Mucosa of descending colon (tissue), 3 donors: ENCODE measurements at regions of chr3 and their contacts with region 1.

Region 1: GRCh38 chr3:94062431-94063404 is at the starts of genes DHFR2 and NSUN3:
- DNase-seq: peak; percentile 89 to 94 (median 94)
- ATAC-seq: peak; percentile 94
- H3K4me3 ChIP-seq: peak within 1 kb of the TSS; percentile 64
- H3K4me1 ChIP-seq: peaks cover 28% of the 10 kb centered on the region
- CTCF ChIP-seq: no peak
- total RNA-seq, gene DHFR2: 5.4 to 9.1 (median 6.2) TPM
- total RNA-seq, gene NSUN3: 18.6 to 33.9 (median 23.0) TPM

Region 2: GRCh38 chr3:94004301-94004910 is 58.3 kb before region 1 on chr3:
- intact Hi-C with region 1: loop called in 1 of 2 experiments (anchors 10 kb)
- DNase-seq: peak in 1 of 3 donors; percentile 18
- ATAC-seq: peak; percentile 88
- H3K4me3 ChIP-seq: no peak overlapping the region
- H3K4me1 ChIP-seq: no peaks in the 10 kb centered on the region
- CTCF ChIP-seq: peak; percentile 54

Region 3: DNA sequence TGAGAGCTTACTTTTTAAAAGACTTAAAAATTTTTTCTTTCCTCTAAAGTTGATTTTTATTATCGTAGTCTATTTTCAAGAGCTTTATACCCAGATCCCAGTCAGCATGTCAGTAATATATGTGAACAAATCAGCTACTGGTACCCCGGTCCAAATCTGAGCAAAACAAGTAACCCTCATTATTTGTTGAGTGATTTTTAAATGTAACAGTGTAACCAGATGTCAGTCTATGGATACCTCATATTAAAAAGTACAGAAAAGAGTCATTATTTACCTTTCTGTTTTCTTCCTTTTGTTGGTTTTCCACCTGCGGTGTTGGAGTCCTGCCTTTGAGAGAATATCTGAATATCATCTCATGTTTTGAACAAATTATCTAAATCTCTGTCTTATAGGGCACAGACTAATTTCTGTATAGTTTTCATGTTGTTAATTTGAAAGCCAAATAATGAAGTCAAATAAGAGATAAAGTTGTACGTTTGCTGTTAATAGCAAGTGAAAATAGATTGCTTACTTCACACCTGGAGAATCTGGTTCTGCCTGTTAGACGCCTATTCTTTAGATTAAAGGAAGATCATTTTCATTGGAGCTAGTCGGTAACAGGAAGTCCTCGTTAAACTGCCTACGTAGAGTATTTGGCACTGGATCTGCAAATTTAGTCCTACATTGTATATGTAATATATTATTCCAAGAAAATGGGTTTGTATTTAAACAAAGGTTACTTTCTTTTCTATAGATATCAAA is 34.5 kb before region 1 on chr3 and contains the start of gene STX19:
- intact Hi-C with region 1: loop called in 1 of 2 experiments (anchors 5 kb)
- DNase-seq: peak in 1 of 3 donors; percentile 83
- ATAC-seq: peak; percentile 60
- H3K4me3 ChIP-seq: peak within 1 kb of the TSS; percentile 16
- H3K4me1 ChIP-seq: peaks cover 3% of the 10 kb centered on the region
- CTCF ChIP-seq: no peak
- total RNA-seq, gene STX19: 7.5 to 20.6 (median 18.9) TPM